Left ventricle myocardium superior (tissue), 1 donor: ENCODE measurements at regions of chr9 and their contacts with region 1.

Region 1: DNA sequence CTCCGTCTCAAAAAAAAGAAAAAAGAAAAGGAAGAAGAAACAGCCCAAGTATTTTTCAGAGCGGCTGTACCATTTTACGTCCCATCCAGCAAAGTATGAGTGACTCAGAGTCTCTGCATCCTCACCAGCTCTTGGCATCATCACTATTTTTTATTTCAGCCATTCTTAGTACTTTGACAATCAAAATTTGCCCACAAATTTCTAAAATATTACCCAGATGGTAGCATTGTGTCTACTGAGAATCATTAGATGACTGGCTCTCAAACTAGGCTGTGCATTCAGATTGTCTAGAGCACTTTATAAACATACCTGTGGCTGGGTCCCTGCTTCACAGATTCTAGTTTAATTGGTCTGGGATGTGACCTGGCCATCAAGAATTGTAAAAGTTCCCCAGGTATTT is 21.6 kb upstream of the MELK start:
- DNase-seq: no peak
- ATAC-seq: no peak

Region 2: GRCh38 chr9:36407122-36407723 is 143.9 kb before region 1 on chr9:
- intact Hi-C with region 1: loop called (anchors 2 kb)
- DNase-seq: peak; percentile 48
- ATAC-seq: peak; percentile 85

Region 3: DNA sequence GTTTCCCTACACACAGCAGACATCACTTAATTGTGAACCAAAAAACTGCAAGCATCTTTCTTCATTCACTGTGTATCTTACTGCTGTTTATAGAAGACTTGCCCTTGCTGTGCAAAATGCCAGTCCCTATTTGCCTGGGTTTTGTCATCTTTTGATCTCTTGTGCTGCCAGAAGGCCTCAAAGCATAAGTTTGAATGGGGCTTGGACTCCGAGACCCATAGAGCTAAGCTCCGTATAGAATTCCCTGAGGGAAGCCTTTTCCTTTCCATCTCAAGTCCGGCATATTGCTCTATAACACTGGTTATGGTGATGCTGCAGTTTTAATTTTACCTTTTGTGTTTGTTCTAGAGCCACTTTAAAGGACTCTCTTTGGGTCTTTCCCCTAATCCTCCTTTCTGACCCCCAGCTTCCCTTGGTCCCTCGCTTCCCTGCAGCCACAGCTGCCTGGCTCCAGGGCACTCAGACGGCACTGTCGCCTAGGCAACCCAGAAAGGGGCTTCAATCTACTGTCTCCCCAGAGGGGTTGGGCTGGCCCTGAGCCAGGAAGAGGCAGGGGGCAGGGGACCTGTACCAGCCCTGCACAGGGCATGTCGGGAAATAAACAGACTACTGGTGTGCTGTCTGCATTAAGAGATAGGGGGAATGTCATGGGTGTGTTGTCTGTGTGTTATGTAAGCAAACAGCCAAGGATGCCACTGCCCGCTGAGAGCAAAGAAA is 51.8 kb before region 1 on chr9:
- intact Hi-C with region 1: loop called (anchors 10 kb)
- DNase-seq: no peak
- ATAC-seq: no peak